Sigmoid colon (tissue), 7 donors: ENCODE measurements at regions of chr7 and their contacts with region 1.

Region 1: DNA sequence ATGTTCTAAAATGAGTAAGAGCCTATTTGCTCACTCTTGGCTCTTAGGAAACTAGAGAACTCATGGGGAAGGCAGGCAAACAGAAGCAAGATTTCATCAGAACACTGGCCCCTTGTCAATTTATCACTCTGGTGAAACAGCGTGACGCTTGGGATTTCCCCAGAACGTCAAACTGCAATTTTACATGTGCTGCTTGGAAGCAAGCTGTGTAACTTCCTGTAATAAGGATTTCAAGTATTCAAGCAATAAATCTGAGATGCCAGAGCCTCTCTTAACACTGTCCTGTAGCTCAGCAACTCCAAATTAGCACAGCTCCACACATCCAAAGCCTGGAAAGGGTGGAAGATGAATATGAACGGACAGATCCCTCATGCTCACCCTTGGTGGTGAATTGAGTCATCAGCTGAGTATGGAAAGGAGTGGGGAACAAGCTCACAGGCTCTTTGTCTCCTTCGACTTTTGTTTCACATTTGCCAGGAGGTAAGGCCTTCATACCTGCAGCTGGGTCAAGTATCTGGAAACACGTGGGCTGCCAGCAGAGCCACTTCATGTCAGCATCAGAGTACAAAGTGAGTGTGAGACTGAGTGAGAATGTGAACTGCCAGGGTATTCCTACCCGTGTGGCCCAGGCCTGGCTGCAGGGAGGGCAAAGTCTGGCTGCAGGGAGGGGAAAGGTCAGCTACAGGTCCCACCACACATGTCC is 140.4 kb upstream of the NAMPT start:
- DNase-seq: peak; percentile 93
- H3K4me3 ChIP-seq: no peak overlapping the region
- H3K27ac ChIP-seq: peak overlapping the region; percentile 54 to 78 (median 68)
- H3K4me1 ChIP-seq: peaks cover 0 to 51% (median 42%) of the 10 kb centered on the region in 4 donors
- H3K27me3 ChIP-seq: no peaks in the 10 kb centered on the region
- CTCF ChIP-seq: no peak
- EP300 ChIP-seq: peak; percentile 84 to 98 (median 91)
- POLR2A ChIP-seq: no peak

Region 2: GRCh38 chr7:106056513-106057203 is 368.5 kb before region 1 on chr7:
- intact Hi-C with region 1: loop called (anchors 10 kb)
- DNase-seq: peak; percentile 90
- H3K4me3 ChIP-seq: no peak overlapping the region
- H3K27ac ChIP-seq: peak overlapping the region in 2 of 4 donors; percentile 72 to 89
- H3K4me1 ChIP-seq: peaks cover 0 to 49% (median 36%) of the 10 kb centered on the region in 4 donors
- H3K27me3 ChIP-seq: no peaks in the 10 kb centered on the region
- CTCF ChIP-seq: peak; percentile 80 to 94 (median 86)
- EP300 ChIP-seq: no peak
- POLR2A ChIP-seq: no peak

Region 3: GRCh38 chr7:106166655-106167342 is 258.4 kb before region 1 on chr7:
- intact Hi-C with region 1: loop called (anchors 2 kb)
- DNase-seq: no peak
- H3K4me3 ChIP-seq: no peak overlapping the region
- H3K27ac ChIP-seq: peak overlapping the region; percentile 27 to 76 (median 54)
- H3K4me1 ChIP-seq: peaks cover 0 to 21% (median 17%) of the 10 kb centered on the region in 4 donors
- H3K27me3 ChIP-seq: no peaks in the 10 kb centered on the region
- CTCF ChIP-seq: peak; percentile 66 to 86 (median 79)
- EP300 ChIP-seq: no peak
- POLR2A ChIP-seq: no peak